GM12878 (cell line): ENCODE measurements at regions of chr3 and their contacts with region 1.

Region 1: DNA sequence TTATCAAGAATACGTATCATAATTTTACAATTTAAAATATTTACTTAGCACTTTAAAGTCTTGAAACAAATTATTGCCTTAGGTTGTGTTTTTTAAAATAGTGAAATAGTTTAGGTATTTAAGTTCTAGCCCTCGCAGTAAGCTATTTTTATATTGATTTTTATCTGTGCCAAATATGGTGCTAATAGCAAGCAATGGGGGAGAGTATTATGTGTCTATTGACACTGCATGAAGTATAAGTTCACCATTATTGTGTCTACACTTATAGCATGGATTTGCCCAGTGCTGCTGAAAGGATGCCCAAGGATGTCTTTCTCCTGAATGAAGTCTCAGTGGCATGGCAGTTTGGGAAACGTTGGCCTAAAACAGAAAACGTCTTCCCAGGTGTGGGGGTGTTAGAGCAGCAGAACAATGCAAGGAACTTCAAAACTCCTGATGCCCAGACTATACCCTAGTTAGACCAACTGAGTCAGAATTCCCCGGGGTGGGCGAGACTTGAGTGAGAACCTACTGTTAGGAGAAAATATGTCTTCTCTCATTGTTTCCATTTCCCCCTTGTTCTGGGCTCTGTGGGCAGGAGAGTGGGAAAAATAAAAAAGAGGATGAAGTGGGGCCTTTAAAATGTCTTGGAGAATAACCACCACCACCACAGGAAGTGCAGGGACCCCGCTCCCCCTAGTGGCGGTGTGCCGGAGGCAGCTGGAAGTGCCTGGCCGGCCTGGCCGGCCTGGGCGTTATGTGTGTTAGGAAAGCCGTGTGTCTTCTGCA is 104.2 kb upstream of the SLC7A14 start:
- DNase-seq: no peak
- ATAC-seq: peak; percentile 81
- H3K4me3 ChIP-seq: no peak overlapping the region
- H3K27ac ChIP-seq: no peak overlapping the region
- H3K4me1 ChIP-seq: no peaks in the 10 kb centered on the region
- H3K27me3 ChIP-seq: no peaks in the 10 kb centered on the region; a peak in 1 of 4 replicates
- CTCF ChIP-seq: peak; percentile 69 to 81 (median 78)
- EP300 ChIP-seq: no peak
- POLR2A ChIP-seq: no peak
- RAD21 ChIP-seq: peak; percentile 86

Region 2: GRCh38 chr3:170419557-170420087 is 270.5 kb before region 1 on chr3:
- CTCF ChIA-PET with region 1: interaction called, 38 read pairs
- POLR2A ChIA-PET with region 1: no interaction called
- RAD21 ChIA-PET with region 1: interaction called, 20 read pairs
- SMC1A ChIA-PET with region 1: no interaction called
- in situ Hi-C with region 1: loop called (anchors 5 kb)
- intact Hi-C with region 1: loop called (anchors 1 kb)
- DNase-seq: no peak
- ATAC-seq: no peak
- H3K4me3 ChIP-seq: no peak overlapping the region
- H3K27ac ChIP-seq: no peak overlapping the region
- H3K4me1 ChIP-seq: no peaks in the 10 kb centered on the region
- H3K27me3 ChIP-seq: peaks cover 11 to 19% of the 10 kb centered on the region in 2 experiments; a peak in 3 of 4 replicates
- CTCF ChIP-seq: no peak
- EP300 ChIP-seq: no peak
- POLR2A ChIP-seq: no peak
- RAD21 ChIP-seq: no peak

Region 3: GRCh38 chr3:170632780-170633179 is 57.3 kb before region 1 on chr3:
- CTCF ChIA-PET with region 1: no interaction called
- POLR2A ChIA-PET with region 1: no interaction called
- RAD21 ChIA-PET with region 1: no interaction called
- SMC1A ChIA-PET with region 1: no interaction called
- in situ Hi-C with region 1: no loop called
- intact Hi-C with region 1: no loop called
- DNase-seq: peak; percentile 95
- ATAC-seq: peak; percentile 97
- H3K4me3 ChIP-seq: no peak overlapping the region
- H3K27ac ChIP-seq: no peak overlapping the region
- H3K4me1 ChIP-seq: peaks cover 27% of the 10 kb centered on the region
- H3K27me3 ChIP-seq: peaks cover 0 to 5% of the 10 kb centered on the region in 2 experiments; a peak in 3 of 4 replicates
- CTCF ChIP-seq: no peak
- EP300 ChIP-seq: peak; percentile 37 to 44; a peak in 2 of 4 replicates
- POLR2A ChIP-seq: no peak
- RAD21 ChIP-seq: no peak

Region 4: GRCh38 chr3:170644711-170645110 is 45.4 kb before region 1 on chr3:
- CTCF ChIA-PET with region 1: no interaction called
- POLR2A ChIA-PET with region 1: no interaction called
- RAD21 ChIA-PET with region 1: no interaction called
- SMC1A ChIA-PET with region 1: no interaction called
- in situ Hi-C with region 1: no loop called
- intact Hi-C with region 1: no loop called
- DNase-seq: no peak
- ATAC-seq: no peak
- H3K4me3 ChIP-seq: no peak overlapping the region
- H3K27ac ChIP-seq: no peak overlapping the region
- H3K4me1 ChIP-seq: no peaks in the 10 kb centered on the region
- H3K27me3 ChIP-seq: peaks cover 0 to 10% of the 10 kb centered on the region in 2 experiments; a peak in 2 of 4 replicates
- CTCF ChIP-seq: no peak
- EP300 ChIP-seq: no peak
- POLR2A ChIP-seq: no peak
- RAD21 ChIP-seq: no peak